ENCODE measurements at regions of chr20 and their contacts with region 1.

Region 1: DNA sequence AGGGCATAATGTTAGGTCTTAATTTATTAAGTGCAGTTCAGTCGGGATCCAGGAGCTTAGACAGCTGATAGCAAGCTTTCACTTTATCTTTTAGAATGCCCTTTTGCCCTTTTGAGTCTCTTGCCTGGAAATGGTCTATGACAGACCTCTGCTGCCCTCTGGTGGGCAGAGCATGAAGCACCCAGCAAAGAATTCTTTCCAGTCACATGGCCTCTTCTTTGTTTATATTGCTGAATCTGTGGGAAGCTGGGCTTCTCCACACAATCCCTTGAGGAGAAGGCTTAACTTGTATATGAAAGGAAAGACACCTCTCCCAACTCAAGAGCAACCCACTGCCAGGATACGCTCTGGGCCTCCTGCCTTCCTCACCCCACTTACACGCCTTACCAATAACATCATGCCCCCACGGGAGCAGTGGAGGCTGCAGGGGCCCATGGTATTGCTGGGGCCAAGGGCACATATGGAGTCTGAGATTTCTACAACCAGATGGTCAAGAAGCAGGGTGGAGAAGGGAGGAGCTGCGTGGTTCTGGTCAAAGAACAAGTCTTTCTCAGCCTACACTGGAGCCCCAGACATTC is 20.4 kb downstream of the WFDC3 start:
- DNase-seq: peak; percentile 59 to 84 (median 74)
- ATAC-seq: peak; percentile 95
- H3K4me3 ChIP-seq: no peak overlapping the region
- H3K4me3 Mint-ChIP-seq: no peak overlapping the region
- H3K27ac ChIP-seq: no peak overlapping the region
- H3K27ac Mint-ChIP-seq: peak overlapping the region in 3 of 9 donors; percentile 4 to 40 (median 5)
- H3K4me1 ChIP-seq: no peaks in the 10 kb centered on the region
- H3K4me1 Mint-ChIP-seq: peaks cover 0 to 5% (median 4%) of the 10 kb centered on the region in 7 donors
- H3K27me3 ChIP-seq: no peaks in the 10 kb centered on the region
- H3K27me3 Mint-ChIP-seq: peaks cover 0 to 14% (median 8%) of the 10 kb centered on the region in 5 donors

Region 2: GRCh38 chr20:45306431-45306982 is 464.8 kb before region 1 on chr20 and contains the start of gene RBPJL:
- CTCF ChIA-PET with region 1: no interaction called
- POLR2A ChIA-PET with region 1: no interaction called
- intact Hi-C with region 1: loop called (anchors 1 to 2 kb)
- DNase-seq: peak in 4 of 9 donors; percentile 21 to 74 (median 31)
- ATAC-seq: no peak
- H3K4me3 ChIP-seq: no peak within 1 kb of the TSS
- H3K4me3 Mint-ChIP-seq: no peak within 1 kb of the TSS
- H3K27ac ChIP-seq: no peak within 1 kb of the TSS
- H3K27ac Mint-ChIP-seq: no peak within 1 kb of the TSS
- H3K4me1 ChIP-seq: no peaks in the 10 kb centered on the region
- H3K4me1 Mint-ChIP-seq: peaks cover 6 to 37% (median 10%) of the 10 kb centered on the region in 7 donors
- H3K27me3 ChIP-seq: no peaks in the 10 kb centered on the region
- H3K27me3 Mint-ChIP-seq: peaks cover 17 to 71% (median 47%) of the 10 kb centered on the region in 5 donors
- total RNA-seq, gene RBPJL: not detected

Region 3: DNA sequence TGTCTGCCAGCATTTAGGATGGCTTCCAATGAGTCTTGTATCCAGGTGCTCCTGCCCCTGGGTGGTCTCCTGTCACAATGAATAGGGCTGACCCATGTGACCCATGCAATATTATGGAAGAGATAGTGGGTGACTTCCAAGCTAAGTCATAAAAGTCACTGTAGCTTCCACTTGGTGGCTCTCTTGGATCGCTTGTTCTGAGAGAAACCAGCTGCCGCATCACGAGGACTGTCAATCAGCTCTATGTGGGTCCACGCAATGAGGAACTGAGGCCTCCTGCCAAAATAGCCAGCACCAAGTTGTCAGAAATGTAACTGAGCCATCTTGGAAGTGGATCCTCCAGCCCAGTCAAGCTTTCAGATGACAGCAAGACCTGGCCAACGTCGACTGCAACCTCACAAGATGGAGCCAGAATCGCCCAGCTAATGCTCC is 448.3 kb before region 1 on chr20:
- CTCF ChIA-PET with region 1: interaction called, 67 read pairs
- POLR2A ChIA-PET with region 1: interaction called, 3 read pairs
- intact Hi-C with region 1: loop called (anchors 1 to 2 kb)
- DNase-seq: no peak
- ATAC-seq: peak; percentile 34
- H3K4me3 ChIP-seq: no peak overlapping the region
- H3K4me3 Mint-ChIP-seq: no peak overlapping the region
- H3K27ac ChIP-seq: no peak overlapping the region
- H3K27ac Mint-ChIP-seq: no peak overlapping the region
- H3K4me1 ChIP-seq: peaks cover 15 to 16% of the 10 kb centered on the region in 2 donors
- H3K4me1 Mint-ChIP-seq: peaks cover 10 to 42% (median 26%) of the 10 kb centered on the region in 7 donors
- H3K27me3 ChIP-seq: no peaks in the 10 kb centered on the region
- H3K27me3 Mint-ChIP-seq: no peaks in the 10 kb centered on the region

Region 4: DNA sequence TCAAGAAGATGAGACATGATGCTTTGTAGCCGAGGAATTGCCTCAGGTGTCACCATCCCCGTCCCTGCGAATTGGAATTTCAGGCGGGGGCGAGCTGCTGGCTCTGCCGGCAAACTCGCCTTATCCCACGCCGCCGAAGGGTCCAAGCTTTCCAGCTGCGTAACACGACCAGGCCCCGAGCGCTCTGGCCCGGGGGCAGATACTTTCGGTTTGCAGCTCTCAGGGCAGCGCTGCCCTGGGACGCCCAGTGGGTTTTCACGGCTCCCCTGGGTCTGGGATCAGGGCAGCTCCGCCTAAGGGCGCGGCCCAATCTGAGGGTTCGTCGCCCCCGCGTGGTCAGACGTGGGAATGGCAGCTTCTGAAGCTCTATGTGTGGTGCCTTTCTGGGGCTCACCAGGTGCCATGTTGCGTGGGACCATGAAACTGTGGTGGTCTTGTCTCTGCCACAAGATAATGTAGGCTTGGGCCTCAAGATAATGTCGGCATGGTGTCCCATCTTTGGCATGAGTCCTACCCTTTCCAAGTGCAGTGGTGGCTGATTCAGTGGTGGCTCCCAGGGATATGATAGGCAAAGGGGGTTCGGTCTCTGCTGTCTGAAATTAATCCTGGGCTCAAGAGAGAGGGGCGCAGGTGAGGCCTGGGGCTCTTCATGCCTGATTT is 334.4 kb before region 1 on chr20:
- CTCF ChIA-PET with region 1: interaction called, 3 read pairs
- POLR2A ChIA-PET with region 1: no interaction called
- intact Hi-C with region 1: loop called in 1 of 2 experiments (anchors 1 kb)
- DNase-seq: peak; percentile 70 to 89 (median 80)
- ATAC-seq: peak; percentile 100
- H3K4me3 ChIP-seq: peak overlapping the region; percentile 65
- H3K4me3 Mint-ChIP-seq: peak overlapping the region; percentile 71 to 86 (median 81)
- H3K27ac ChIP-seq: peak overlapping the region; percentile 50
- H3K27ac Mint-ChIP-seq: peak overlapping the region in 6 of 9 donors; percentile 31 to 84 (median 64)
- H3K4me1 ChIP-seq: peaks cover 5 to 11% of the 10 kb centered on the region in 2 donors
- H3K4me1 Mint-ChIP-seq: peaks cover 0 to 24% (median 14%) of the 10 kb centered on the region in 7 donors
- H3K27me3 ChIP-seq: no peaks in the 10 kb centered on the region
- H3K27me3 Mint-ChIP-seq: no peaks in the 10 kb centered on the region

Region 5: GRCh38 chr20:45545754-45546453 is 225.4 kb before region 1 on chr20:
- CTCF ChIA-PET with region 1: no interaction called
- POLR2A ChIA-PET with region 1: no interaction called
- intact Hi-C with region 1: loop called (anchors 1 to 5 kb)
- DNase-seq: no peak
- ATAC-seq: no peak
- H3K4me3 ChIP-seq: no peak overlapping the region
- H3K4me3 Mint-ChIP-seq: no peak overlapping the region
- H3K27ac ChIP-seq: no peak overlapping the region
- H3K27ac Mint-ChIP-seq: no peak overlapping the region
- H3K4me1 ChIP-seq: no peaks in the 10 kb centered on the region
- H3K4me1 Mint-ChIP-seq: no peaks in the 10 kb centered on the region
- H3K27me3 ChIP-seq: peaks cover 0 to 7% of the 10 kb centered on the region in 2 donors
- H3K27me3 Mint-ChIP-seq: peaks cover 19 to 56% (median 40%) of the 10 kb centered on the region in 5 donors